A549 (cell line): ENCODE measurements at regions of chr19 and their contacts with region 1.

Region 1: DNA sequence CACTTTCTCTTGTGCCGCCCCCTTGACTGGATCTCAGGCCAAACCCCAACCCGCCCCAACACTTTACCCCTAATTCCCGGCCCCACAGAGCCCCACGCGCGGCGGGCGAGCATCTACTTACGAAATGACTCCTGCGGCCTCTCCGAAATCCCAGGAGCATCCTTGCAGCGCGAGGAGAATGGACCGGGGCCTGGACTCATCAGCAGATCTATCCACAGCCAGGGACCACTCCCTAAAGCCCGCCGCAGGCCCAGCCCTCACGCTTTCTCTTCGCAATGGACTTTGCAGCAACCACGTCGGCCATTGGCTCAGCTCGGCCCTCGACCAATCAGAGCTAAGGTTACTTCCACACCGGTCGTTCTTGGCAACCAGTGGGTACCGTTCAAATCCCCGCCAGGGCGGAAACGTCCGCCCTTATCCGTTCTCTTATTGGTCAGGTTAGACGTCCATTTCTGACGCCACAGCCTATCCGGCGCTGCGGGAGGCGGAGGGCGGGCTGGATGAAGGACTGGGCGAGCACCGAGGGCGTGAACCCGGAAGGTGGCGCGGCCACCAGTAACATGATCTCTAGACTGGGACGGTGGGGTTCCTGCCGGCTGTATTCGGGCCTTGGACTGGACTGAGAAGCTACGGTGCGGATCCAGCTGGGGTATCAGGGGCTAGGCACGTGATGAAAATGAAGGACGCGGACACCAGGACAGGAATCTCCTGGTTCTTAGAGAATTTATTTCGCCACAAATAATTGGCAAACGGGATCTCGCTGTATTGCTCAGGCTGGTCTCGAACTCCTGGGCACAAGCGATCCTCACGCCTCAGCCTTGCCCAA is at the starts of genes CEP89 and FAAP24:
- DNase-seq: peak; percentile 100
- ATAC-seq: peak; percentile 96 to 98
- H3K4me3 ChIP-seq: peak within 1 kb of the TSS; percentile 60
- H3K27ac ChIP-seq: peak within 1 kb of the TSS; percentile 75 to 89
- H3K4me1 ChIP-seq: peaks cover 19% of the 10 kb centered on the region
- CTCF ChIP-seq: no peak
- EP300 ChIP-seq: 0 out of 5 replicates have a peak, but pooled peaks of 1 of the 2 experiments have one; percentile 34
- POLR2A ChIP-seq: peak; percentile 88
- RAD21 ChIP-seq: peak in 1 of 2 experiments; percentile 18; a peak in 1 of 5 replicates
- polyA plus RNA-seq, gene CEP89: 31.5 and 45.3 TPM in 2 replicates
- polyA plus RNA-seq, gene FAAP24: 14.4 and 15.9 TPM in 2 replicates

Region 2: DNA sequence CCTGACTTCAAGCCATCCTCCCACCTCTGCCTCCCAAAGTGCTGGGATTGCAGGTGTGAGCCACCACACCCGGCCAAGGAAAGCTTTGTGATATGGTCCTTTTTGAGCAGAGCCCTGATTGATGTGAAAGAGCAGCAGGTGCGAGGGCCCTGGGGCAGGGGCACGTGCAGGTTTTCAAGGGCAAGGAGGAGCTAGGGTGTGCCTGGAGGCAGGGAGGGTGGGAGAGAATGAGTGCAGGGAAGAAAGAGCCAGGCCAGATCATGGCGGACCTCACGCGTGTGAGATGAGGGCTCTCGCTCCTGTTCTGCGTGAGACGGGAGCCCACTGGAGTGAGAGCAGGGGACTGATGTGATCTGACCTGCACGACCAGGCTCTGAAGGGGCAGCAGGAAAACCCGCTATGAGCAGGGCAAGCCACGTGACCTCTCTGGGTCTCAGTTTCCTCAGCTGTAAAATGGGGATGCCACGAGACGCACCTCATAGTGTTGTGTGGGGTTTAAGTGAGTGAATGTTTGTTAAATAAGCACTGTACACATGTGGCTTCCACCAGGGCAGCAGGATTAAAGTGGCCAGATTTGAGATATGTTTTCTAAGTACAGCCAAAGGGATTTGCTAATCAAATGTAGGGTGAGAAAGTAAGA is 25.9 kb after region 1 on chr19:
- CTCF ChIA-PET with region 1: interaction called, 20 read pairs
- POLR2A ChIA-PET with region 1: no interaction called
- DNase-seq: no peak
- ATAC-seq: no peak
- H3K4me3 ChIP-seq: no peak overlapping the region
- H3K27ac ChIP-seq: peak overlapping the region in 1 of 2 experiments; percentile 9; a peak in 2 of 6 replicates
- H3K4me1 ChIP-seq: peaks cover 26% of the 10 kb centered on the region
- CTCF ChIP-seq: no peak
- EP300 ChIP-seq: no peak
- POLR2A ChIP-seq: no peak
- RAD21 ChIP-seq: no peak

Region 3: DNA sequence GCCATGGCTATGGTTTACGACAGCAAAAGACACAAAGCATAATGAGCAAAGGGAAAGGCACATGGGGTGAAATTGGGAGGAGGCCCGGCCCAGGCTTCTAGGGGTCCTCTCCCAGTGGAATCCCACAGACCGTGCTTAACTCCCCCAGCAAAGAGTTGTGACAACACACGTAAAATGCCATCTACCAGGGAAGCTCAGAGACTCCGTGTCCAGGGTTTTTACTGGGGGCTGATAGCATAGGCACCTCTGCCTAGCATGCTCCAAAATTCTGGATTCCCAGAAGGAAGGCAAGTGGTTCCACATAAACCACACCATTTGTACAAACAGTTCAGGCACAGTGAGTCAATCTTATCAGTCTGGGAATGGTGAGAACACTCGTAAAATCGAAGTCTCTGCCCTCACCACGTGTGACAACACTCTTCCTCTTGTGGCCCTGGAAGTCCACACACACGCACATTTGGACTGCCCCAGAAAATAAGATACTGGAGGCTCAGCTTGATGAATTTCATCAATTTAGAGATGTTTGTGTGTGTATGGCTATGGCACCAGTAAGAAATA is 57.9 kb after region 1 on chr19:
- CTCF ChIA-PET with region 1: interaction called, 19 read pairs
- POLR2A ChIA-PET with region 1: no interaction called
- DNase-seq: peak in 1 of 2 experiments; percentile 57
- ATAC-seq: no peak
- H3K4me3 ChIP-seq: no peak overlapping the region
- H3K27ac ChIP-seq: no peak overlapping the region
- H3K4me1 ChIP-seq: peaks cover 35% of the 10 kb centered on the region
- CTCF ChIP-seq: no peak
- EP300 ChIP-seq: no peak
- POLR2A ChIP-seq: no peak
- RAD21 ChIP-seq: no peak

Region 4: DNA sequence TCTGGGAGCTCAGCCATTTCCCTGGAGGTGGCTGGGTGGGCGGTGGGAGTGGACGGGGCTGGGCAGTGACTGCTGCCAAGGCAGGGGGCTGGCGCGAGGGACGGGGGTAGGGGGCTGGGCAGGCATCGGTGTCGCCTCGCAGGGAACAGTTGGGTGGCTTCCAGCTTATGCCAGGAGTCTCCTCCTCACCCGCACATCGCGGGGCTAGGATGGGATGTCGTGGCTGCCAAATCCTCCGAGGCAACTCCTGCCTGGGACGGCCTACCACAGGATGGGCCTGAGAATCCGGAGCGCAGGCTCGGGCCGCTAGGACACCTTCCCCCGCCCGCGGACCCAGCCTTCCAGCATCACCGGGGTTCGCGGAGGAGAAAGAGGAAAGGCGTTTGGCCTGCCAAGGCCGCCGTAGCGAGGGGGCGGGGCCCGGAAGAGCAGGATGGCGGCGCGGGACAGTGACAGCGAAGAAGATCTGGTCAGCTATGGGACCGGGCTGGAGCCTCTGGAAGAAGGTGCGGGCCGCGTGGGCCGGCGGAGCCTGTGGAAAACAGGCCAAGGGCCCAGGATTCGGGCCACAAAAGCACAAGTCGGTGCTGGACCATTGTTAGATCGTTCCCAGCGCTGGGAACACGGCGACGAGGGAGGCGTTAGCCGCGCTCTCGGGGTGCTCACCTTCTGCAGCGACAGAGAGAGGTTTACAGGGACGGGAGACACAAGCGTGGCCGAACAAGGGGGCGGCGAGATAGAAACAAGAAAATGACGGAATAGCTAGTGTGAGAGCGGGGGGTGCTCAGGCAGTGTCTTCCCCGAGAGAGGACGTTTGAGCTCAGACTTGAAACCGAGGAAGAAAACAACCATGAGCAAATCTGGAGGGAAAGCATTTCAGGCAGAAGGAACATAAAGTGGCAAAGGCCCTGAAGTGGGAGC is 109.1 kb after region 1 on chr19 and contains the start of gene GPATCH1:
- CTCF ChIA-PET with region 1: interaction called, 55 read pairs
- POLR2A ChIA-PET with region 1: interaction called, 5 read pairs
- DNase-seq: peak; percentile 96 to 99
- ATAC-seq: peak; percentile 90
- H3K4me3 ChIP-seq: peak within 1 kb of the TSS; percentile 76
- H3K27ac ChIP-seq: peak within 1 kb of the TSS; percentile 88 to 92
- H3K4me1 ChIP-seq: peaks cover 38% of the 10 kb centered on the region
- CTCF ChIP-seq: no peak
- EP300 ChIP-seq: no peak; a peak in 1 of 5 replicates
- POLR2A ChIP-seq: peak; percentile 79
- RAD21 ChIP-seq: peak; percentile 33 to 54; a peak in 4 of 5 replicates
- polyA plus RNA-seq, gene GPATCH1: 19.0 and 24.2 TPM in 2 replicates

Region 5: DNA sequence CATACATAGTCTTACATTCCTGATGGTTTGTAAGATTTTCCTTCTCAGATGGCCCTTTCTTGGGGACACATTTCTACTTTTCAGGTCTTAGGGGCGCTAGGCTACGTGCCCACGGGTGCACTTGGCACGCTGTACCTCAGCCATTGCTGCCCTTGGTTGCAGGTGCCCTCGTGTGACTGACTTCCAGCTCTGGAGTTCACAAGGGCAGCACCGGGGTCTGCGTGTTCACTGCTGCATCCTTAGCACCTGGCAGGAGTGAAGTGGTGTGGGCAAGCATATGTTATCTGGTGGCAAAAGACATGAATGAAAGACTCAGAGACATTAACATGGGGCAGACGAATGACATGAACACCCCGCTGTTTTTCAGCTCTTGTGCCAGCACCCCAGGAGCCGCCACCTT is 146.7 kb after region 1 on chr19:
- CTCF ChIA-PET with region 1: interaction called, 349 read pairs
- POLR2A ChIA-PET with region 1: no interaction called
- DNase-seq: no peak
- ATAC-seq: peak; percentile 45 to 52; a peak in 5 of 6 replicates
- H3K4me3 ChIP-seq: no peak overlapping the region
- H3K27ac ChIP-seq: peak overlapping the region; percentile 1 to 27; a peak in 3 of 6 replicates
- H3K4me1 ChIP-seq: 0 out of 3 replicates have a peak, but pooled peaks cover 3% of the 10 kb centered on the region
- CTCF ChIP-seq: no peak
- EP300 ChIP-seq: no peak
- POLR2A ChIP-seq: no peak
- RAD21 ChIP-seq: no peak

Region 6: GRCh38 chr19:33156334-33156733 is 184.4 kb after region 1 on chr19:
- CTCF ChIA-PET with region 1: interaction called, 13 read pairs
- POLR2A ChIA-PET with region 1: no interaction called
- DNase-seq: no peak
- ATAC-seq: peak in 1 of 2 experiments; percentile 26; a peak in 1 of 6 replicates
- H3K4me3 ChIP-seq: no peak overlapping the region
- H3K27ac ChIP-seq: no peak overlapping the region
- H3K4me1 ChIP-seq: peaks cover 7% of the 10 kb centered on the region; the same call in 2 of the 3 replicates
- CTCF ChIP-seq: no peak
- EP300 ChIP-seq: no peak
- POLR2A ChIP-seq: no peak
- RAD21 ChIP-seq: no peak